CD14-positive monocyte (primary cell): ENCODE measurements at regions of chr11 and their contacts with region 1.

Region 1: DNA sequence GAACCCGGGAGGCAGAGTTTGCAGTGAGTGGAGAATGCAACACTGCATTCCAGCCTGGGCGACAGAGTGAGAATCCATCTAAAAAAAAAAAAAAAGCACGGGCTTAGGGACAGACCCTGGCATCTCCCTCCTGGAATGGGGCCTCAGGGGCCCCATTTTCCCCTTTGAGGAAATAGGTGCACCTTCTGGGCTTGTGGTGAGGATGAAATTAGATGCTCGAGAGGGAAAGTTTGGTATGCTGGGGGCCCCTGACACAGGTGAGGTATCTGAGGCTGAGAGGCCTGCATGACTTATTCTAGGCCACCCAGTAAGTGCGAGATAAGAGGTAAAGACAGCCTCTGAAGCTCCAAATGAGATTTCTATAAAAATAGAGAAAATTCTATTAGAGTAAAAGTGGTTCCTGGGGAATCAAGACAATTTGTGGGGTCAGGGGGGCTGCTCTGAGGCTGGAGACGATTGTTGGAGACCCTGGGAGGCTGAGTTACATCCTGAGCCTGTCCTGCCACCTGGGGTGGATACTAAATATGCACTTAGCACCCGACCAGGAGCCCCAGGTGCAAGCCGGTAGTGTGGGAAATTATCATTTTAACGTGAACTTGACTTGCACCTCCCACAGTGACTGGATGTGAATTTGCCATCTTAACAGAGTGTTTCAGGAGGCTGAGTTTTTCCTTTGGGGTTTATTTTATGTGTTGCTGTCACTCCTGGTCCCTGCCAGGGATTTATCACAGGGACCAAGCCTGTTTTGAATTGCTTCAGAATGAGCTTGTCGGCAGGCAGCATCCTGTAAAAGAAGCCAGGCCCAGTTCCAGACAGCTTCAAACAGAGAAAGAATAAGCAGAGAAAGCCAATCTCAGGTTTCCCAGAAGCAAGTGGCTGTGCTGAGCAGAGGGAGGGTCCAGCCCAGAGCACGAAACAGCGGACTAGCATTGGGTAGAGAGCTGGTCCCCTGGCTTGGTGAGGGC is 48.4 kb upstream of the TSKU start:
- DNase-seq: no peak
- H3K4me3 ChIP-seq: no peak overlapping the region
- H3K4me3 Mint-ChIP-seq: no peak overlapping the region
- H3K27ac ChIP-seq: no peak overlapping the region
- H3K27ac Mint-ChIP-seq: no peak overlapping the region
- H3K4me1 ChIP-seq: no peaks in the 10 kb centered on the region
- H3K4me1 Mint-ChIP-seq: no peaks in the 10 kb centered on the region
- H3K27me3 ChIP-seq: no peaks in the 10 kb centered on the region
- H3K27me3 Mint-ChIP-seq: peaks cover 6 to 14% (median 11%) of the 10 kb centered on the region in 3 donors
- CTCF ChIP-seq: no peak

Region 2: GRCh38 chr11:76391021-76391420 is 343.7 kb before region 1 on chr11:
- intact Hi-C with region 1: no loop called
- DNase-seq: no peak
- H3K4me3 ChIP-seq: no peak overlapping the region
- H3K4me3 Mint-ChIP-seq: no peak overlapping the region
- H3K27ac ChIP-seq: no peak overlapping the region
- H3K27ac Mint-ChIP-seq: peak overlapping the region in 2 of 7 donors; percentile 14 to 26
- H3K4me1 ChIP-seq: peaks cover 0 to 3% of the 10 kb centered on the region in 2 donors
- H3K4me1 Mint-ChIP-seq: peaks cover 12% of the 10 kb centered on the region
- H3K27me3 ChIP-seq: no peaks in the 10 kb centered on the region
- H3K27me3 Mint-ChIP-seq: peaks cover 0 to 3% (median 1%) of the 10 kb centered on the region in 3 donors
- CTCF ChIP-seq: no peak

Region 3: GRCh38 chr11:76799066-76799804 is 64.5 kb after region 1 on chr11:
- intact Hi-C with region 1: loop called (anchors 2 kb)
- DNase-seq: peak; percentile 71 to 85 (median 75)
- H3K4me3 ChIP-seq: peak overlapping the region in 1 of 3 experiments; percentile 66
- H3K4me3 Mint-ChIP-seq: peak overlapping the region; percentile 67 to 77
- H3K27ac ChIP-seq: no peak overlapping the region
- H3K27ac Mint-ChIP-seq: no peak overlapping the region
- H3K4me1 ChIP-seq: peaks cover 9 to 11% of the 10 kb centered on the region in 2 donors
- H3K4me1 Mint-ChIP-seq: peaks cover 14% of the 10 kb centered on the region
- H3K27me3 ChIP-seq: peaks cover 0 to 8% of the 10 kb centered on the region in 2 donors
- H3K27me3 Mint-ChIP-seq: peaks cover 18 to 29% (median 24%) of the 10 kb centered on the region in 3 donors
- CTCF ChIP-seq: peak; percentile 98

Region 4: DNA sequence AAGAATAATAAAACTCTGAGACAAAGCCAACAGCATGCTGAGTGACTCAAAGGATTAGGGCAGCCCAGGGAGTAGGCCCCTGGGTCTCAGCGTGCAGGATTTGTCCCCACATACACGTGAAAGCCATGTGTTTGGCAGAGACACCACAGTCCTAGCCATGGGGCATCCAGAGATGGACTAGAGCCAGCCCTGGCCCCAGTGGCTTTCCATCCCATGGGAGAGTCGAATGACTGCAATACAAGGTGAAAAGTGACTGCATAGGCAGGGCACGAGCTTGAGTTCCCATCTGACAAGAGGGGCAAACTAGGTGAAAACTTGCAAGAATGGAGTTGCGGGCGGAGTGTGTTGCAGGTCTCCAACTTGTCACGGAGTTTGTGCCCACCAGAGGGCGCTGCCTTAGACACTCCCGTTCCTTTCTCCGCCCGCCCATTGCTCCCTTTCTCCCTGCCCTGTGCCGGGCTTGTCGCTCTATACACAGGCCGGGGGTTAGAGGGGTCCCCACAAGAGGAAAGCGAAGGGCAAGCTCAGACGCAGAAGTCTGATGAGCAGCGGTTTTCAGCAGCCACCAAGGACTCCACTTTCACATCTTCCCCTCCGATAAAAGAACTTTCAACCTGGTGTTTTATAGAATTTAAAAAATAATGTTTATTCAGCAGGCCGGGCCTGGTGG is 72.6 kb after region 1 on chr11:
- intact Hi-C with region 1: loop called in 1 of 2 experiments (anchors 2 kb)
- DNase-seq: peak; percentile 56 to 74 (median 72)
- H3K4me3 ChIP-seq: no peak overlapping the region
- H3K4me3 Mint-ChIP-seq: peak overlapping the region in 1 of 2 donors; percentile 63
- H3K27ac ChIP-seq: no peak overlapping the region
- H3K27ac Mint-ChIP-seq: peak overlapping the region in 1 of 7 donors; percentile 56
- H3K4me1 ChIP-seq: peaks cover 8 to 9% of the 10 kb centered on the region in 2 donors
- H3K4me1 Mint-ChIP-seq: peaks cover 12% of the 10 kb centered on the region
- H3K27me3 ChIP-seq: no peaks in the 10 kb centered on the region
- H3K27me3 Mint-ChIP-seq: peaks cover 7 to 39% (median 18%) of the 10 kb centered on the region in 3 donors
- CTCF ChIP-seq: peak; percentile 91

Region 5: GRCh38 chr11:76891278-76891677 is 156.5 kb after region 1 on chr11:
- intact Hi-C with region 1: loop called in 1 of 2 experiments (anchors 10 kb)
- DNase-seq: no peak
- H3K4me3 ChIP-seq: no peak overlapping the region
- H3K4me3 Mint-ChIP-seq: no peak overlapping the region
- H3K27ac ChIP-seq: no peak overlapping the region
- H3K27ac Mint-ChIP-seq: peak overlapping the region in 1 of 7 donors; percentile 78
- H3K4me1 ChIP-seq: no peaks in the 10 kb centered on the region
- H3K4me1 Mint-ChIP-seq: peaks cover 16% of the 10 kb centered on the region
- H3K27me3 ChIP-seq: no peaks in the 10 kb centered on the region
- H3K27me3 Mint-ChIP-seq: no peaks in the 10 kb centered on the region
- CTCF ChIP-seq: no peak

Region 6: DNA sequence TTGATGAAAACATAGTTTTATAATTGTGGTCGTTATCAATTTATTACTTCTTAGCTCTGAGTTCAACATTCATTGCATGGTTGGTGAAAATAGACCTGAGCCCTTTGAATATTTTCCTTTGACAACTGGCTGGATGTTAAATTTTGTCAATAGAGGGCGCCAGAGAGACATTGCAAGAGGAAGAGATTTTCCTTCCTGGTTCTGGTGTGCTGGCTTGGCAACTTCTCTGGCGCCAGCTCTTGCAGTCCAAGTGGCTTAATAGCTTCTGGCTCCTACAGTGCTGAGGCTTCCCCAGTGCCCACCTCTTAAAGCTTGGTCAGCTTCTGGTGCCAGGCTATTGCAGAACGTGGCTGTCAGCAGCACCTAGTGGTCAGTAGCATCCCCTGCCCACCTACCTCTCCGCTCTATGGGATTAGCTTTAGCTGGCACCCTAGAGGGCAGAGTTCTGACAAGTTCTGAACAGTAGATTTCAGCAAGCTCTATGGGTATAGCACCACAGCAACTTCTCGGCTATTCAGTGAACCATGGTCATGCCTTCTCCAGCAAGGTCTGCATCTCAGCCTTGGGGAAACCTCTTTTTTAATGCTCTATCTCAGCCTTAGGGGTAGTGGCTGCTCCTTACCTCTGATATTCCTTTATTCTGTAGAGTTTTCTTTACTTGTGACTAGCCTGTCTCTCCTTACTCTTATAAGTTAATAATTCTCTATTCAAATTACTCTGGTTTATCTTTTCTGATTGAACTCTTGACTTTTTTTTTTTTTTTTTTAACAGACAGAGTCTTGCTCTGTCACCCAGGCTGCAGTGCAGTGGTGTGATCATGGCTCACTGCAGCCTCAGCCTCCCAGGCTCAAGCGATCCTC is 185.4 kb after region 1 on chr11:
- intact Hi-C with region 1: loop called in 1 of 2 experiments (anchors 5 kb)
- DNase-seq: peak; percentile 67 to 71 (median 69)
- H3K4me3 ChIP-seq: no peak overlapping the region
- H3K4me3 Mint-ChIP-seq: peak overlapping the region in 1 of 2 donors; percentile 9
- H3K27ac ChIP-seq: no peak overlapping the region
- H3K27ac Mint-ChIP-seq: no peak overlapping the region
- H3K4me1 ChIP-seq: peaks cover 0 to 13% of the 10 kb centered on the region in 2 donors
- H3K4me1 Mint-ChIP-seq: peaks cover 10% of the 10 kb centered on the region
- H3K27me3 ChIP-seq: no peaks in the 10 kb centered on the region
- H3K27me3 Mint-ChIP-seq: peaks cover 0 to 1% (median 0%) of the 10 kb centered on the region in 3 donors
- CTCF ChIP-seq: peak; percentile 79